ENCODE measurements at regions of chr9 and their contacts with region 1.

Region 1: GRCh38 chr9:28464481-28465216 is 891.4 kb upstream of the C9orf72 start:
- DNase-seq: no peak
- ATAC-seq: no peak

Region 2: DNA sequence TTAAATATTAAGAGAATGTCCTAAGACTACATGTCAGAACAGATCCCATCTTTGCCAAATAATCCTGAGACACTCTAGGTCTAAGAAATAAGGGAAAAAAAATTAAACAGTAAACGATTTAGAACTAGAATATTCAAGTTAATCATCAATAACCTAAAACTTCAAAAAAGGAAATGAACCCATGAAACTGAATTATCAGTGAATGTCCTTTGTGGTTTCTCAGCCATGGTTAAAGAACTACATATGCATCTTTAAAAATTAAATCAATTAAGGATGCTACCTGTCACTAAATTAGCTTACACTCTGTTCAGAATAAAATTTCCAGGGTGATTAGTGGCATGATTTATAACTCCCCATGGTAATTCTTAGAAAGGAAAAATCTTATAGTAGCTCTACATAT is 41.4 kb before region 1 on chr9:
- intact Hi-C with region 1: no loop called
- DNase-seq: no peak
- ATAC-seq: no peak

Region 3: GRCh38 chr9:28528049-28528448 is 63.4 kb after region 1 on chr9:
- intact Hi-C with region 1: loop called in 1 of 2 experiments (anchors 10 kb)
- DNase-seq: no peak
- ATAC-seq: no peak